Prostate gland (tissue), 2 donors: ENCODE measurements at regions of chr18 and their contacts with region 1.

Region 1: DNA sequence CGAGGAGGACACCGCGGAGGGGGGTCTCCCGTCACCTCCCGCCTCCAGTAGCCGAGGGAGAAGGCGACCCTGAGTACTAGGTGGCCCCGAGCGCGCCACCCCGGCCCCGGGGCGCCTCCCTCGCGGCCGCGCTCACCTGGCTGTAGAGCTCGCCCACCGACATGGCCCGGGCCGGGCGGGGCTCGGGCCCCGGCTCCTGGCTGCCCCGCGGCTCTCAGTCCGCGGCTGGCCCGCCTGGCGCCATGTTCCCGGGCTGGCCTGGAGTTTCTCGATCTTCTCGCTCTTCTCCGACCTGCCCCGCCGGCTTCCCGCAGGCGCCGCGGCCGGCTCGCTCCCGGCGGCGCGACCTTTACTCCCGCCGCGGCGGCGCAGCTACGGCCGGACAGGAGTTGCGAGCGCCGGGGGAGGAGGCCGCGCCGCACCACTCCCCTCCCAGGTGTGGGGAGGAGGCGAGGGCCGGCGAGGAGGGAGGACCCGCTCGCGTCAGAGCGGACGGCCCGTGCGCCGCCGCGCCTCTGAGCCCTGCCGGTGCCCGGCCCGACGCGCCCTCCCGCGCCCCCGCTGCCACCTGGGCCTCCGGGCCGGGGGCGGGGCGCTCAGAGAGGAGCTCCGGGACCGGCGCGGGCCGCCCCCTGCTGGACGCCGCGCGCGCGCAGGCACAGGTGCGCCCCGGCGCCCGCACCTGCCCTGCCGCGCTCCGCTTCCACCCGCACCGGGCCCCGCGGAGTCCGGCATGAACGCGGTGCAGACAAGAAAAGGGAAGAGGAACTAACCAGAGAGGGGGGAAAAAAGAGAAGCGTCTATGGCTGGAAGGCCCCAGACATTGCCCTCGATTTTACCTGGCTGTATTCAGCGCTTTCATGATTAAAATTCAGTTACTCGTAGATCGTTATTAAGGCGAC is at the start of gene MYO5B:
- DNase-seq: peak; percentile 79
- H3K4me3 ChIP-seq: peak within 1 kb of the TSS; percentile 76 to 80
- H3K27ac ChIP-seq: peak within 1 kb of the TSS; percentile 66 to 72
- H3K4me1 ChIP-seq: no peaks in the 10 kb centered on the region
- H3K27me3 ChIP-seq: no peaks in the 10 kb centered on the region
- CTCF ChIP-seq: peak; percentile 52 to 94 (median 64)
- POLR2A ChIP-seq: peak; percentile 90
- total RNA-seq, gene MYO5B: 28.5 to 31.1 TPM

Region 2: DNA sequence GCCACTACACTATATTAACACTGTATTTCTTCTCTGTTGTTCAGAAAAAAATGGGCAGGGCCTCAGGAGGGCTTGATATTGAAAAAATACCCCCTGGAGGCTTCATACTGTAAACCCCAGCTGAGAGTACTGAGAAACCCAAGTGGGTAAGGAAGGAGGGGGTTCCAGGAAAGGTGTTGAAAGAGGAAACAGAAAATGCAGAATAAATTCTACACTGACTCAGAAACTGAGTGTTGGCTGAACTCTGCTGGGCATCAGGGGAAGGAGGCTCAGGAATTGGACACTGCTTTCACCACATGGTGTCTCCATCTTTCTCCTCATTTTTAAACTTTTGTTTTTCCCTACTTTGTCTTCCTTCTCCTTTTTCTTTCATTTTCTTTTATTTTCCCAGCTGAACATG is 988.2 kb before region 1 on chr18:
- intact Hi-C with region 1: no loop called
- DNase-seq: no peak
- H3K4me3 ChIP-seq: no peak overlapping the region
- H3K27ac ChIP-seq: no peak overlapping the region
- H3K4me1 ChIP-seq: no peaks in the 10 kb centered on the region
- H3K27me3 ChIP-seq: no peaks in the 10 kb centered on the region
- CTCF ChIP-seq: no peak
- POLR2A ChIP-seq: no peak

Region 3: GRCh38 chr18:49944663-49945062 is 250.2 kb before region 1 on chr18:
- intact Hi-C with region 1: loop called (anchors 2 kb)
- DNase-seq: no peak
- H3K4me3 ChIP-seq: no peak overlapping the region
- H3K27ac ChIP-seq: no peak overlapping the region
- H3K4me1 ChIP-seq: no peaks in the 10 kb centered on the region
- H3K27me3 ChIP-seq: no peaks in the 10 kb centered on the region
- CTCF ChIP-seq: peak in 1 of 4 experiments; percentile 54
- POLR2A ChIP-seq: no peak

Region 4: GRCh38 chr18:50009773-50010335 is 185.0 kb before region 1 on chr18:
- intact Hi-C with region 1: loop called (anchors 5 kb)
- DNase-seq: peak; percentile 12
- H3K4me3 ChIP-seq: no peak overlapping the region
- H3K27ac ChIP-seq: no peak overlapping the region
- H3K4me1 ChIP-seq: no peaks in the 10 kb centered on the region
- H3K27me3 ChIP-seq: no peaks in the 10 kb centered on the region
- CTCF ChIP-seq: peak in 3 of 4 experiments; percentile 42 to 74 (median 48)
- POLR2A ChIP-seq: no peak